ENCODE measurements at regions of chr4 and their contacts with region 1.

Region 1: DNA sequence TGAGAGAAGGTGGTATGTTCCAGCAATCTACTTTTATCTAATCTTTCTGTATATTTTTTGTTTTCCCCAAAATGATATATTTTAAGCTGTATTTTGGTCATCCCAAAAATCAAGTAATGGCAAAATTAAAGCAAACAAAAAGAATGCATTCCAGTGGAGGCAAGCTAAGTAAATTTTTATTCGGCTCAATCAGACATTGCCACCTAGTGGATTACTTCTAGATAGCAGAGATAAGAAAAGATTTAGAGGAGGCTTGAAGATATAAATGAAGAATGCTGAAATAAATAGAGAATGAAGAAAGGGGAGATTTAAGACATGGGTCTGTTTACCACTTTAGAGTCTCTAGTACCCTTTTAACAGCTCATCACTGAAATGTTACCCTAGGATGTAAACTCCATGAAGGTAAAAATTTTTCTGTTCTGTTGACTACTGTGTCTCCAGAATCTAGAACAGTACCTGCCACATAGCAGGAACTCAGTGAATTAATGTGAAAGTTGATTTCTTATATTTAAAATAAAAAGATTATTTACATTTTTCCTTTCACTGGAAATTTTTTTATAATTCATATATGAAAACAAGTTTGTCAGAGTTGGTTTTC is 110.9 kb upstream of the ANK2 start:
- DNase-seq: peak; percentile 7
- H3K4me3 ChIP-seq: no peak overlapping the region
- CTCF ChIP-seq: peak; percentile 50

Region 2: GRCh38 chr4:112840061-112840460 is 98.5 kb before region 1 on chr4:
- CTCF ChIA-PET with region 1: interaction called, 20 read pairs
- POLR2A ChIA-PET with region 1: no interaction called
- DNase-seq: no peak
- H3K4me3 ChIP-seq: no peak overlapping the region
- CTCF ChIP-seq: no peak

Region 3: DNA sequence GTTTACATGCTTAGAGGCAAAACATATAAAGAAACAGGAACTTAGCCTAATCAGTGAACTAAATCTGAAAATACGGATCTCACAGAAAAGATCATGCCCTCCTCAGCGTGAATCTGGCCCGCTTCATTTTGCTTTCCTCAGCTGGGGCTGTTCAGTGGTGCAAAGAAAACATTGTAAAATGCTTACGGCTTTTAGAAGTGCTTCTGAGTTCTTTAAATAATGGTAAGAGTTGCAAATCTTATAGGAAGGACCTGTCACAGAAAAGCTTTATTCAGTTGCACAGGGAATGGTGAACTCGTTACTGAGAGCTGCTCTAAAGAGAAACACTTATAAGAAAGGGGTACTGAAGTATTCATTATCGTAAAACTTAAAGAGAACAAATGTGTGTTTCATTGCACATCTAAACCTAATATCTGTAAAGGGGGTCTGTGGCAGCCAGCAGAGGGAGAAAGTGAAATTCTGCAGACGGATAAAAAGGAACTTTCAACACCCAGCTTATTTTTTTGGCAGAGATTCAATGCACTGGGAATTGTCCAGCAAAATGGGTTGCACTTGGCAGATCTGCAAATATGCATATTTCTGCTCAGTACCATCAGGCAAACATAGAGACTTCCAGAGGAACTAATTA is 28.3 kb before region 1 on chr4:
- CTCF ChIA-PET with region 1: interaction called, 13 read pairs
- POLR2A ChIA-PET with region 1: no interaction called
- DNase-seq: peak; percentile 28
- H3K4me3 ChIP-seq: no peak overlapping the region
- CTCF ChIP-seq: no peak

Region 4: GRCh38 chr4:112927544-112927943 is 11.0 kb before region 1 on chr4:
- CTCF ChIA-PET with region 1: interaction called, 56 read pairs
- POLR2A ChIA-PET with region 1: no interaction called
- DNase-seq: no peak
- H3K4me3 ChIP-seq: no peak overlapping the region
- CTCF ChIP-seq: no peak

Region 5: DNA sequence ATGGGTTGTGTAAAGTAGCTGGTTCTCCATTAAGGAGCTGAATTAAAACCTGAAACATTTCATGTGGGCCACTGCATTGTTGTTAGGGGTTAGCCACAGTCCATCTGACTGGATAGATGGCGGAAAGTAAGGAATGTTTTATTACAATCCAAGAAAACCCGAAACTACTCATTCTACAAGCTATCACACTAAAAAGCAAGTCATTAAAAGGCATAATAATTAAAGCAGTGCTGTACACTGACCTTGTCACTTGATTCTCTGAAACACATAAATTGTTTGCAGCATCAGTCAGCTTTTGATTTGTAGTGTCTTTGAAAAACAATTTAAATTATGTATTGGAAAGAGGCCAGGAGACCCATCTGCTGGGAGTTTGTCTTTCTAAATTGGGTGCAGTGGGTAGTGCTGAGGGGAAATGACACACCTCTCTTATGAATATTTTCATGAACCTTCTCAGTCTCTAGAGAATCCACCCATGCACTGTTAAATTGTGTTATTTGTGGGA is 35.2 kb after region 1 on chr4:
- CTCF ChIA-PET with region 1: interaction called, 13 read pairs
- POLR2A ChIA-PET with region 1: no interaction called
- DNase-seq: no peak
- H3K4me3 ChIP-seq: no peak overlapping the region
- CTCF ChIP-seq: no peak